ENCODE measurements at regions of chr5 and their contacts with region 1.

Region 1: DNA sequence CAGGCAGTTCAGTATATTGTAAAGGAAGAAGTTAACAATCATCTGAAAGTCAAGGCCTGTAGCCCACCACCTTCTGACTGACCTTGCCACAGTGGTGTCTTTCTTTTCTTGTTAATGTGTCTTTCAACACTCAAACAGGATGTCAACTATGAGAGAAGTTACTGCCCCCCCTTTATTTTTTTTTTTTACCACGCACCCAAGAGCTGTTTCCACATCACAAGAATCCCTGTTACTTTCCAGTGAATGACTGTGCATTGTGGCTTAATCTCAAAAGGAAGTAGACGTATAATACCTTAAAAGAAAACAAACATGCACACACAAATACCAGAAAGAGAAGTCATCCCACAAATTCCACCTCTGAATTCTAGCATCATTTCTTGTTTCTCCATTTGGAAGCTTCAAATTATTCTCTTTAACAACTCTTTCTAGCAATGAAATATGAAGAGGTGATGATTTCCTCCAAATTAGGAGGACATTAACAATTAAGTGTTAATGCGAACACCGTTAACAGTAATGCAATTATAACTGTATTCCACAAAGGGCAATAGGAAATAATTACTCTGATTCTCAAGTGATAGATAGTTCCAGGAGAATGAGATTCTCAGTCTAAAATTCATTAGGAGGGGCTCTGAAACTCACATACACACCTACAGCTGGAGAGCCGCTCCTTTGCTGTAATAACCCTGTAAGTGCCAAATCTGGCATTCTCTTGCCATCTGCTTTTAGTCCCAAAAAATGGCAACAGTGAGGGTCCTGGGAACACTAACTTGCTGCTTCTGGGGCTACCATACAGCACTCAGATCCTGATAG is 201.0 kb downstream of the EFNA5 start:
- DNase-seq: peak; percentile 96
- H3K4me3 ChIP-seq: peak overlapping the region in 1 of 3 experiments; percentile 16
- H3K27ac ChIP-seq: peak overlapping the region; percentile 97
- H3K4me1 ChIP-seq: peaks cover 61% of the 10 kb centered on the region
- H3K27me3 ChIP-seq: no peaks in the 10 kb centered on the region
- CTCF ChIP-seq: no peak
- POLR2A ChIP-seq: no peak

Region 2: GRCh38 chr5:107322936-107323335 is 146.8 kb before region 1 on chr5:
- CTCF ChIA-PET with region 1: no interaction called
- POLR2A ChIA-PET with region 1: no interaction called
- dilution Hi-C with region 1: no loop called
- intact Hi-C with region 1: loop called (anchors 1 kb)
- DNase-seq: peak; percentile 57
- H3K4me3 ChIP-seq: no peak overlapping the region
- H3K27ac ChIP-seq: no peak overlapping the region
- H3K4me1 ChIP-seq: peaks cover 24% of the 10 kb centered on the region
- H3K27me3 ChIP-seq: no peaks in the 10 kb centered on the region
- CTCF ChIP-seq: no peak
- POLR2A ChIP-seq: no peak

Region 3: GRCh38 chr5:107389130-107389774 is 80.4 kb before region 1 on chr5:
- CTCF ChIA-PET with region 1: interaction called, 10 read pairs
- POLR2A ChIA-PET with region 1: no interaction called
- dilution Hi-C with region 1: no loop called
- intact Hi-C with region 1: loop called (anchors 2 kb)
- DNase-seq: peak; percentile 92
- H3K4me3 ChIP-seq: no peak overlapping the region
- H3K27ac ChIP-seq: peak overlapping the region; percentile 57
- H3K4me1 ChIP-seq: peaks cover 32% of the 10 kb centered on the region
- H3K27me3 ChIP-seq: no peaks in the 10 kb centered on the region
- CTCF ChIP-seq: no peak
- POLR2A ChIP-seq: no peak

Region 4: DNA sequence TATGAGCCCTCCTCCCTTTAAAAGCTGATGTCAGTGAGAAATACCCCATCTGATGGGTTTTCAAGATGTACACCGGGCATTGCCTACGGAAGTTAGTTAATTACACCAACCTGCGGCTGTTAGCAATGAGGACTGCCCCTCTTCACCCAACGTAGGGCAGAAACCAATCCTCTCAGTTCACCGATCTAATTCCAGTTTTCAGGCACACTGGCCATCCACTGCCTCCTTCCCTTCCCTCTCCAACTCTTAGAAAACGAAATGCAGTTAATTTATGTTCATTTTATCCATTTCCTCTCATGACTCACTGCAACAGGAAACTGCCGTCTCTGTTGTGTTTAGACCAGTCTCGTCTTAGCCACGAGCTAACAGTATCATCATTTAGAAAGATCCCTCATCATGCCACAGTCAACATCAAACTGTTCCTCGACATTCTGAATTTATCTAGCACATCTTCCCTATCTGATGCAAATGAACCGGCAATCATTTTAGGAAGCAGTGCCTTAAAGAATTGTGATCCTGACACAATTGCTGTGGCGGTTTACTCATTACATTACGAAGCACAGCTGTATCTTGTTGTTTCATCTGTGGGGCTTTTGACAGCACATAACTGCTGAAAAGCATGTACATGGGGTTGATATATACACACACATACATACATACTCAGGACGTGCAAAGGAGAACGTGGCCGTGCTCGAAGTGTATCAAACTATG is 32.4 kb after region 1 on chr5:
- CTCF ChIA-PET with region 1: interaction called, 22 read pairs
- POLR2A ChIA-PET with region 1: interaction called, 5 read pairs
- dilution Hi-C with region 1: no loop called
- intact Hi-C with region 1: loop called (anchors 1 kb)
- DNase-seq: peak; percentile 93
- H3K4me3 ChIP-seq: peak overlapping the region; percentile 43 to 90 (median 59)
- H3K27ac ChIP-seq: peak overlapping the region; percentile 97
- H3K4me1 ChIP-seq: peaks cover 24% of the 10 kb centered on the region
- H3K27me3 ChIP-seq: no peaks in the 10 kb centered on the region
- CTCF ChIP-seq: no peak
- POLR2A ChIP-seq: peak; percentile 86

Region 5: DNA sequence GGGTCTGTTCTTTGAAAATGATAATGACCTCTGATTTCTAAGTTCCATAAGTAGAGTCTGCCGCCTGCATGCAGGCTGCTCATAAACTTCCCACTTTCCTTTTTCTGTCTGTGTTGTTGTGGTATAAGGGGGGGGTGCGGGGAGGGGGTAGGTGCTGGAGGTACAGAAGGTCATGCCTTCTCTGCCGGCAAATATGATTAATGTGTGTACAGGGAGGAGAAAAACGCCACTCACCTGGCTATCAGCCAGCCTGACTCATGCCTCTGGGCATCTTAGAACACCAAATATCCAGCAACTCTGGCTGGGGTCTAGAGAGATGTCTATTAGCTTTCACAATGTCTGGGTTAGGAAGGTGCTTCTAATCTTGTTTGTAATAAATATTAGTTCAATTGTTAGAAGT is 72.7 kb after region 1 on chr5:
- CTCF ChIA-PET with region 1: no interaction called
- POLR2A ChIA-PET with region 1: no interaction called
- dilution Hi-C with region 1: no loop called
- intact Hi-C with region 1: loop called (anchors 1 kb)
- DNase-seq: peak; percentile 98
- H3K4me3 ChIP-seq: peak overlapping the region in 1 of 3 experiments; percentile 55
- H3K27ac ChIP-seq: peak overlapping the region; percentile 96
- H3K4me1 ChIP-seq: peaks cover 29% of the 10 kb centered on the region
- H3K27me3 ChIP-seq: no peaks in the 10 kb centered on the region
- CTCF ChIP-seq: no peak
- POLR2A ChIP-seq: no peak

Region 6: DNA sequence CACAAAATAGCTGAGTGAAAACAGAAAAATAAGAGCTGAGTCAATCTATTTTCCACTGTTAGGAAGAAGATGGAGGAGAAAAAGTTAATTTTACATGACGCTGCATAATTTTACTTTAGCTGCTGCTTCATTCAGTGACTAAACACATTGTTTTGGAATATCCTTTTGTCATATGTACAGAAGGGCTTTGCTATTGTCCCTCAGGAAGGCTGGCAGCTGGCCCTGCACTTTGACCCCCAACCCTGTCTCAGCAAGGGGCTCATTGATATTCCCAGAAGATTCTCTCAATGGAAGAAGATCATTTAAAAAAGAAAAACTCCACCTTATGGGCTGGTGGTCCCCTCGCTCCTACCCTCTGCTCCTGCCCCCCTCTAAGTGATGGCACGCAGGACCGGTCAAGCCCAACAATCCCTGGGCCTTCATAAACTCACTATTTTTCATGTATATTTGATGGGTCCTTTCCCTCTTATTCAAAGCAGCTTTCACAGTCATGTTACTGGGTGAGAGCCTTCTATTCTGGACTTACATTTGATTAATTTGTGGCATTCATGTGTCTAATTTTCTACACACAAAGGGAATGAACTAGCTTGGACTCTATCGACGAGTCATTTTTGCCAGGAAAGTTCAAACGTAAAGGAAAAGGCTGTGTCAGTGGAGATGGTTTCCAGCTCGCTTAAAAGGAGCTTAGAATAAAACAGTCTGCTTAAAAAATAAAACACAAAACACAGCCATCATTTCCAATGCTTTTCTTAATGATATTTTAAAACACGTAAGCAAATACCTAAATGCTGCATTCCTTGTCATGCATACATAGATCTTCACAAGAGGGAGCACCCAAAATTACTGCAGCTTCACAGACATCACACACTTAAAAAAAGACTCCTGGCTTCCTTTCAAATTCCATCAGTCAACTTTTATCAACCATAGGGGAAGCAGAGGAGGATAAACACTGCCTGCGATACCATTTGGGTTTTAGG is 96.4 kb after region 1 on chr5:
- CTCF ChIA-PET with region 1: interaction called, 57 read pairs
- POLR2A ChIA-PET with region 1: no interaction called
- dilution Hi-C with region 1: no loop called
- intact Hi-C with region 1: loop called (anchors 1 kb)
- DNase-seq: peak; percentile 65
- H3K4me3 ChIP-seq: no peak overlapping the region
- H3K27ac ChIP-seq: peak overlapping the region; percentile 52
- H3K4me1 ChIP-seq: peaks cover 31% of the 10 kb centered on the region
- H3K27me3 ChIP-seq: no peaks in the 10 kb centered on the region
- CTCF ChIP-seq: no peak
- POLR2A ChIP-seq: no peak

Region 7: DNA sequence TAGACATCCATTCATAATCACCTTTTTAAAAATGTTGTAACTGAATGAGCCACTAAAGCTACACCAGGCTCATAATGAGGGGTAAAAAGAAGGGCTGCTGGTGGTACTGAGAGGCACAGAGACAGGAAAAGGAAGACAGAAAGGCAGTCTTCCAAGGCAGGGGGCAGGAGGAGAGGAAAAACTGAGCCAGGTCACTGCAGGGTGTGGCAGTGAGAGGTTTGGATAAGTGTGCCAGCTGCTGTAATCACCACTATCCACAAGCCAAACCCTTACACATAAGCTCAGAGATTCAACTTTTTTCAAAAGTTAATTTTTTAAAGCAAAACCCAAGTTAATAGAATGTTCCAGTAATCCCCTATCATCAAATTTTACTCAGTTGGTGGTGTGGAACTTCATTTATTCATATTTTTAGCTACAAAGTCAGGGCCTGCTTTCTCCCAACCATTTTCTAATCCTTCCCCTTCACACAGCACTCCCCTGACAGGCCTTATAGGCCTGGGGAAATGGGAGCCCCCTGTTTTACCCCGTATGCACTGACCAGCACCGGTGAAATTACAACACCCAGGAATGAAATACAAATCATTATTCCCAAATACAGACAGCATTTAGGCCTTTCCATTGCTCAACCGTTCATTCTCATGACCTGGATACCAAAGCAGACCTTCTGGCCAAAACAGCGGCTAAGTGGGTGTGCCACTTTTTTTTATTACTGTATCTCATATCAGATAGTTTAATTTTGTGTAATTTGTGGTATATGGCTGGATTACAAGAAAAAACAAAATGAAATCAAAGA is 124.8 kb after region 1 on chr5:
- CTCF ChIA-PET with region 1: no interaction called
- POLR2A ChIA-PET with region 1: no interaction called
- dilution Hi-C with region 1: no loop called
- intact Hi-C with region 1: no loop called
- DNase-seq: no peak
- H3K4me3 ChIP-seq: no peak overlapping the region
- H3K27ac ChIP-seq: no peak overlapping the region
- H3K4me1 ChIP-seq: peaks cover 8% of the 10 kb centered on the region
- H3K27me3 ChIP-seq: no peaks in the 10 kb centered on the region
- CTCF ChIP-seq: no peak
- POLR2A ChIP-seq: no peak

Measured in endothelial cell of umbilical vein (primary cell).